Posterior vena cava (tissue), 2 donors: ENCODE measurements at regions of chr10 and their contacts with region 1.

Region 1: GRCh38 chr10:132627666-132628531 is 90.3 kb downstream of the INPP5A start:
- DNase-seq: peak; percentile 83

Region 2: DNA sequence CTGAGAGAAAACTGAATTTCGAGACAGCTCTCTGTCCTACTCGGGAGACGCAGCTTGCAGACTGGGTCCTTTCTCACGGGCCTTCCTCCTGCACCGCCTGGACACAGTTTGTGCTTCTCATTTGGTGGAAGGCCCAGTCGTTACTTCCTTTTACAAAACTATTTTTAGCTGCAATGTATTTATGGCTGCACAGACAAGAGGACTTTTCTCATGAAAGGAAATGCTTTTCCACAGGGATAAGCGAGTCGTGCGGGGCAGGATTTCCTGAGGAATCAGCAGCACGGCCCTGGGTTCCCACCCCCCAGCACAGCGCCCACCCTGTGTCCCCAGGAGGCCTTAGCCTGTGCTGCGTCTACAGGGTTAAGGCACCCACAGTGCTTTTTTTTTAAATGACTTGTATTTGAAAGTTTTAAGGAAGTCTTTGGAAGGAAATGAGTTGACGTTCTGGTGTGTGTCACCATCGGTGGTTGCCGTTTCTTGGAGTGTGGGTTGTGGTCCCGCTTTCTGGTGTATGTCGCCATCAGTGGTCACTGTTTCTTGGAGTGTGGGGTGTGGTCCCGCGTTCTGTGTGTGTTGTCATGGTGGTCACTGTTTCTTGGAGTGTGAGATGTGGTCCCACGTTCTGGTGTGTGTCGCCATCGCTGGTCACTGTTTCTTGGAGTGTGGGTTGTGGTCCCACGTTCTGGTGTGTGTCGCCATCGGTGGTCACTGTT is 39.4 kb before region 1 on chr10:
- intact Hi-C with region 1: loop called in 1 of 2 experiments (anchors 5 kb)
- DNase-seq: no peak